ENCODE measurements at regions of chr7 and their contacts with region 1.

Region 1: DNA sequence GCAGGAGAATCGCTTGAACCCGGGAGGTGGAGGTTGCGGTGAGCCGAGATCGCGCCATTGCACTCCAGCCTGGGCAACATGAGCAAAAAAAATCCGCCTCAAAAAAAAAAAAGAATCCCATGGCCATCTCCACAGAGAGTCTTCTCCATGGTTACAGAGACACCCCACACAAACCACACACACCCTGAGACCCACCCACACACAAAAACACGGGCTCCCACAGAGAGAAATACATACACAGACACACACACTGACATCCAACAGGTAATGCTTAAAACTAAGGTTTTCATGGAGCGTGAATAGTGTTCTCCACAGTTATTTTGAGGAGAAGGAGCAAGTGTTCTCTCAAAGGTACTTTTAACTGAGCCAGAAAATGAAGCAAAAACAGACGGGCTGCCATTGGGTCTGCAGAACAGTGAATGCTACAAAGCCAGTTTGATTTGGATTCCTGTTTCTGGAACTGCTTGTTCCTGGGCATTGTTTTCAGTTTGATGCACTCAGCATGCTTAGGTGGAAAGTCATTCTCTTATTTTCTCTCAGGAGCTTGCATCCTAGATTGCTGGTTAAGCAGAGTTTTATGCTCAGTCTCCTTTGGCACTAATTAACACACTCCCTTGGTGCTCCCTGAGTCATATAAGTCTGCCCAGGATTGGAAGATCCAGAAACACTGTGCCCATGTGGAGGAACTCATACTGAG is 15.4 kb downstream of the AHCYL2 start:
- DNase-seq: no peak
- H3K4me3 Mint-ChIP-seq: no peak overlapping the region
- H3K27ac Mint-ChIP-seq: no peak overlapping the region
- H3K4me1 Mint-ChIP-seq: no peaks in the 10 kb centered on the region
- H3K27me3 Mint-ChIP-seq: no peaks in the 10 kb centered on the region

Region 2: GRCh38 chr7:129224251-129225205 is 15.7 kb before region 1 on chr7 and contains the start of gene AHCYL2:
- CTCF ChIA-PET with region 1: interaction called, 16 read pairs
- POLR2A ChIA-PET with region 1: no interaction called
- DNase-seq: peak; percentile 98
- H3K4me3 Mint-ChIP-seq: peak within 1 kb of the TSS; percentile 89
- H3K27ac Mint-ChIP-seq: peak within 1 kb of the TSS; percentile 95
- H3K4me1 Mint-ChIP-seq: peaks cover 34% of the 10 kb centered on the region
- H3K27me3 Mint-ChIP-seq: peaks cover 2% of the 10 kb centered on the region
- total RNA-seq, gene AHCYL2: 9.7 to 11.4 TPM

Measured in activated CD4-positive, alpha-beta T cell treated with anti-CD3 and anti-CD28 coated beads, Interleukin-2, amount 10 ng/mL, durations not matched to agents 7 days and 5 days (primary cell).